ENCODE measurements at regions of chr5 and their contacts with region 1.

Region 1: DNA sequence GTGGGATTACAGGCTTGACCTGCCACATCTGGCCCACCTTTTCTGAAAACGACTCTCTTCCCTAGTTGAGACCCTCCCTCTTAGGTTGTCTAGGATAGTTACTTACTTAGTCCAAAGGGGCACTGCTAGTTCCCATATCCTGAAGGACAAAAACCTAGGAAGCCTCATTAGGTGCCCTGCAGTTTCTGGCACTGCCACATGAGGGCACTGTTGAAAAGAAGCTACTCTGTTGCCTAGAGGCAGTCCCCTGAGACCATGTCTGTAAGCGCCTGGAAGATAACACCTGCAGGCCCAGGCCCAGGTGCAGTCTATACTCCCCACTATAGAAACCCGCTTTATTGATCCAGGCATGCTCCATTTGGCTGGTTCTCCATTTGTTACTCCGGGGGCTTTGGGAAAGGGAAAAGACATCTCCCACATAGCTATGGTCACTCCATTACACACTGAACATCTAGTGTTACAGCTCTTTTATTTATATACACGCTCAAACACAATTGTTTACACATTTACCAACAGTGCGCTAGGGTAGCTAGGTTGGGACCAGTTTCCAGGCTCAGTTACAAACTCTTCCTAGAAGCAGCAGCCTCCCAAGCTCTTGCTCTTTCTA is 73.4 kb upstream of the PPARGC1B start:
- DNase-seq: peak; percentile 56 to 95
- H3K4me3 ChIP-seq: no peak overlapping the region
- H3K27ac ChIP-seq: no peak overlapping the region
- H3K4me1 ChIP-seq: no peaks in the 10 kb centered on the region; a peak in 1 of 7 replicates
- H3K27me3 ChIP-seq: no peaks in the 10 kb centered on the region; a peak in 1 of 7 replicates
- CTCF ChIP-seq: peak; percentile 64 to 94 (median 91)
- EP300 ChIP-seq: no peak
- POLR2A ChIP-seq: no peak
- RAD21 ChIP-seq: peak; percentile 80 to 88

Region 2: GRCh38 chr5:149605998-149606724 is 50.5 kb before region 1 on chr5:
- CTCF ChIA-PET with region 1: no interaction called
- POLR2A ChIA-PET with region 1: no interaction called
- DNase-seq: no peak
- H3K4me3 ChIP-seq: no peak overlapping the region
- H3K27ac ChIP-seq: no peak overlapping the region
- H3K4me1 ChIP-seq: no peaks in the 10 kb centered on the region
- H3K27me3 ChIP-seq: no peaks in the 10 kb centered on the region
- CTCF ChIP-seq: no peak
- EP300 ChIP-seq: no peak
- POLR2A ChIP-seq: no peak
- RAD21 ChIP-seq: no peak

Region 3: DNA sequence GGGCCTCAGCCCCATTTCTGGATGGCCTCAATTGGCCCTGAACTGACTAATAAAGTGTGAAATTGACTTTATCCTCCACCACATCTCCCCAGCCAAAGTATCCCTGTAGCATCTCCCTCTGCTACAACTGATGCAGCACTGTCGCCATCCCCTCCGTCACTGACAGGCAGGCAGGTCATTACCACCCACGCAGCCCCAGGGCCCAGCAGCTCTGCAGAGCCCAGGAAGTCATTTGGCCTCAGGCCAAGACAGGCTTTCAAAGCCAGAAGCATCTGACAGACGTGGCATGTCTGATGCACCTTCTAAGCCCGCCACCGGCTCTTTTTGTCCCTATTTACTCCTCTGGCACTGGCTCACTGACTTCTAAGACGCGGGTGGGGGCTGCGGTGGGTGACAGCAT is 10.1 kb before region 1 on chr5:
- CTCF ChIA-PET with region 1: interaction called, 12 read pairs
- POLR2A ChIA-PET with region 1: no interaction called
- DNase-seq: no peak
- H3K4me3 ChIP-seq: no peak overlapping the region
- H3K27ac ChIP-seq: no peak overlapping the region
- H3K4me1 ChIP-seq: no peaks in the 10 kb centered on the region
- H3K27me3 ChIP-seq: no peaks in the 10 kb centered on the region
- CTCF ChIP-seq: no peak
- EP300 ChIP-seq: no peak
- POLR2A ChIP-seq: no peak
- RAD21 ChIP-seq: no peak

Region 4: DNA sequence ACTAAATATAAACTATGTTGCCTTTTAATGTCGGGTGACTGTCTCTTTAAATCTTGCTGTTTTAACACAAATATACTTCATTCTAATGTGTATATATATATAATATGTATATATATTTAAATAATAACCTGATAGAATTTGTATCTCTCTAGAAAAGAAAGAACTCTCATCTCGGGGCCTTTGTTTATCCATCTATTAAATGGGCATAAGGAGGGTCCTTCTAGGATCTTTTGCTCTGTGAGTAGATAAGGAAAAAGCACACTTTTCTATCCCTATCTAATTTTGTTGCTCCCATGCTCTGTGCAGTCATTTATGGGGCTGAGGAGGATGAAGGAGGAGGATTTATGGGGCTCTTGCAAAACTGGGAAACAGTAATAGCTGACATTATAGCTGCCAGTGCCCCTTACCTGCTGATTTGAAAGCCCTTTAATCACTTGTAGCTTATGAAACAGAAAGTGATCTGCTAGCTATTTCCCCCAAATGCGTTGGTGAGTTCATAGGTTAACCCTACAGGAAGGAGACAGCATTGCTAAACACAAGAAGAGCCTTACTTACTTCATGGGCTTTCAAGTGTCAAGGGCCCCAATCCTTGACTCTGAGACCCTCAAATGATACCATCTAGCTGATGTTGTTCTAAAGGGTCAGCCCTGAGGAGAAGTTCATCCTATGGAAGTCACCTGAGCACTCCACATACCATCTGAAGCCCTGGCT is 67.6 kb after region 1 on chr5:
- CTCF ChIA-PET with region 1: interaction called, 13 read pairs
- POLR2A ChIA-PET with region 1: no interaction called
- DNase-seq: no peak
- H3K4me3 ChIP-seq: no peak overlapping the region
- H3K27ac ChIP-seq: no peak overlapping the region
- H3K4me1 ChIP-seq: no peaks in the 10 kb centered on the region
- H3K27me3 ChIP-seq: peaks cover 0 to 2% (median 0%) of the 10 kb centered on the region in 4 experiments; a peak in 3 of 7 replicates
- CTCF ChIP-seq: no peak
- EP300 ChIP-seq: no peak
- POLR2A ChIP-seq: no peak
- RAD21 ChIP-seq: no peak

Region 5: GRCh38 chr5:149828161-149828884 is 171.6 kb after region 1 on chr5:
- CTCF ChIA-PET with region 1: interaction called, 153 read pairs
- POLR2A ChIA-PET with region 1: interaction called, 3 read pairs
- DNase-seq: peak; percentile 73 to 94
- H3K4me3 ChIP-seq: no peak overlapping the region
- H3K27ac ChIP-seq: no peak overlapping the region
- H3K4me1 ChIP-seq: no peaks in the 10 kb centered on the region
- H3K27me3 ChIP-seq: no peaks in the 10 kb centered on the region
- CTCF ChIP-seq: peak; percentile 54 to 96 (median 88)
- EP300 ChIP-seq: no peak
- POLR2A ChIP-seq: no peak
- RAD21 ChIP-seq: peak; percentile 92 to 94

Measured in H1 (cell line).